ENCODE measurements at regions of chr1 and their contacts with region 1.

Region 1: GRCh38 chr1:31548907-31549808 is 27.2 kb upstream of the TINAGL1 start:
- DNase-seq: peak; percentile 97
- H3K4me3 ChIP-seq: peak overlapping the region in 1 of 4 donors; percentile 12
- H3K27ac ChIP-seq: no peak overlapping the region
- H3K4me1 ChIP-seq: peaks cover 7 to 19% (median 12%) of the 10 kb centered on the region in 4 donors
- H3K27me3 ChIP-seq: peaks cover 0 to 29% (median 2%) of the 10 kb centered on the region in 4 donors
- CTCF ChIP-seq: peak in 2 of 3 experiments; percentile 91 to 95
- EP300 ChIP-seq: no peak
- POLR2A ChIP-seq: no peak

Region 2: DNA sequence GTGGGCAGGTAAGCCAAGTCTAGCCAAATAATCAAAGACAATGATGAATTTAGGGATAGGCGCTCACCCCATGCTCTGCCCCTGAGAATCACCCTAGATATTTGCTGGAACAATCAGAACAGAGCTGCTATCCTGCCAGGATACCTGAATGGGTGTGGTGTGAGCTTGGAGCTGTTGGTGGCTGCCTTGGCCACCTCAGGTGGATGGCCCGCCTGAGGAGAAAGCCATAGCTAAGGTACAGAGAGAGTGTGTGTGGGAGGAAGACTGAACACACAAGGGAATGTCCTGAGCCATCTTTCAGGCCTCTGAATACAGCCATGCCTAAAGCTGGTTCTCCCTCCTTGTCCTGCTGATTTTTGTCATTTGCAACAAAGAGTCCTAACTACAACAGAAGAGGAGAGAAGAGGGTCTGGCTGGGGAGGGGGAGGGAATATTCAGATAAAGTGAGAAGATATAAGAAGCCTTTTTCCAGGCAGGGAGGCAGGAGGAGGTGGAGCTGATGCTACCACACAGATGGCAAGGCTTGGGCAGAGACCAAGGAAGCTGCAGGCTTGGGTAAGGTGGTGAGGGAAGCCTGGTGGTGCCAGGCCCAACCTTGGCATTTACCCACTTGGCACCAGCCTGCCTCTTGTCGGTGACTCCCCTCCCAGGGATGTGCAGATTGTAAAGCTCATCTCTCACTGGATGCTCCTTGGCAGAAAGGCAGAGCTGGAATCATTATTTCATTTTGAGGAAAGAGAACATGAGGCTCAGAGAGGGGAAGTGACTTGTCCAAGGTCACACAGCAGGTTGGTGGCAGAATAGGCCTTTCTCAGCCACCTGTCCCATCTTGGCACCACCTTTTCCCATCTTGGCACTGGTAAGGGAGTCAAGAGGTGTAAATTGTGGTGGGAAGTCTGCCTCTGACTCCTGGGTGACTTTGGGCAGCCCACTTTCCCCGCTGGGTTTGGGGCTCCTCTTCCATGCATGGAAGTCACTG is 359.2 kb before region 1 on chr1:
- intact Hi-C with region 1: loop called (anchors 5 kb)
- DNase-seq: no peak
- H3K4me3 ChIP-seq: no peak overlapping the region
- H3K27ac ChIP-seq: no peak overlapping the region
- H3K4me1 ChIP-seq: no peaks in the 10 kb centered on the region
- H3K27me3 ChIP-seq: peaks cover 0 to 24% (median 0%) of the 10 kb centered on the region in 4 donors
- CTCF ChIP-seq: no peak
- EP300 ChIP-seq: no peak
- POLR2A ChIP-seq: no peak

Region 3: DNA sequence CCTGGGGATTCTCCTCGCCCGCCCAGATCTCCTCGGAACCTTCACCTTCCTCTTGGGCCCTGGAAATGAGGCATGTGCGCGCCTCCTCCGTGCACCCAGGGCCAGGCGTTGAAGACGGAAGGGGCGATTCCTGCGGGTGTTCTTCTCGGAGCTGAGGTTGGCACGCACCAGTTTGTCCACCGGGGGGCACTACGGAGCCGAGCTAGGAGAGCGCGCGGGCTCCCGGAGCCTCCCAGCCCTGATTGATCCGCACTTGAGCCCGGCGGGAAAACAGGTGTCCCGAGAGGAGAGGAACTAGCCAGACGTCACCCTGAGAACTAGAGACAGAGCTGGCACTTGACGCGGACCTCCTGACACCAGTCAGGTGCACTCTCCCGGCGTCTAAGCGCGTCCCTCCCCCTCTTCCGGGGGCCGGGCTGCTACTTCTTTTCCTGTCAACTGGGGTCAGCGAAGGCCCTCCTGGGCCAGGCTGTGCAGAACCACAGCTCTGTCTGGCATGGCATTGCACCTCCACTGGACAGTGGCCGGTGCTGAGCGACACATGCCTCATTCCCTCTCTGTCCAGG is 154.4 kb before region 1 on chr1:
- intact Hi-C with region 1: loop called (anchors 5 kb)
- DNase-seq: no peak
- H3K4me3 ChIP-seq: peak overlapping the region; percentile 40 to 58 (median 46)
- H3K27ac ChIP-seq: no peak overlapping the region
- H3K4me1 ChIP-seq: peaks cover 8 to 11% (median 11%) of the 10 kb centered on the region in 4 donors
- H3K27me3 ChIP-seq: no peaks in the 10 kb centered on the region
- CTCF ChIP-seq: peak; percentile 81 to 87 (median 82)
- EP300 ChIP-seq: no peak
- POLR2A ChIP-seq: no peak

Region 4: GRCh38 chr1:31422505-31423319 is 126.4 kb before region 1 on chr1:
- intact Hi-C with region 1: loop called (anchors 10 kb)
- DNase-seq: no peak
- H3K4me3 ChIP-seq: no peak overlapping the region
- H3K27ac ChIP-seq: no peak overlapping the region
- H3K4me1 ChIP-seq: peaks cover 0 to 5% (median 0%) of the 10 kb centered on the region in 4 donors
- H3K27me3 ChIP-seq: no peaks in the 10 kb centered on the region
- CTCF ChIP-seq: peak in 2 of 3 experiments; percentile 89 to 90
- EP300 ChIP-seq: no peak
- POLR2A ChIP-seq: no peak

Region 5: GRCh38 chr1:31460027-31460426 is 89.1 kb before region 1 on chr1:
- intact Hi-C with region 1: loop called (anchors 10 kb)
- DNase-seq: no peak
- H3K4me3 ChIP-seq: no peak overlapping the region
- H3K27ac ChIP-seq: no peak overlapping the region
- H3K4me1 ChIP-seq: no peaks in the 10 kb centered on the region
- H3K27me3 ChIP-seq: peaks cover 0 to 32% (median 0%) of the 10 kb centered on the region in 4 donors
- CTCF ChIP-seq: no peak
- EP300 ChIP-seq: no peak
- POLR2A ChIP-seq: no peak

Region 6: DNA sequence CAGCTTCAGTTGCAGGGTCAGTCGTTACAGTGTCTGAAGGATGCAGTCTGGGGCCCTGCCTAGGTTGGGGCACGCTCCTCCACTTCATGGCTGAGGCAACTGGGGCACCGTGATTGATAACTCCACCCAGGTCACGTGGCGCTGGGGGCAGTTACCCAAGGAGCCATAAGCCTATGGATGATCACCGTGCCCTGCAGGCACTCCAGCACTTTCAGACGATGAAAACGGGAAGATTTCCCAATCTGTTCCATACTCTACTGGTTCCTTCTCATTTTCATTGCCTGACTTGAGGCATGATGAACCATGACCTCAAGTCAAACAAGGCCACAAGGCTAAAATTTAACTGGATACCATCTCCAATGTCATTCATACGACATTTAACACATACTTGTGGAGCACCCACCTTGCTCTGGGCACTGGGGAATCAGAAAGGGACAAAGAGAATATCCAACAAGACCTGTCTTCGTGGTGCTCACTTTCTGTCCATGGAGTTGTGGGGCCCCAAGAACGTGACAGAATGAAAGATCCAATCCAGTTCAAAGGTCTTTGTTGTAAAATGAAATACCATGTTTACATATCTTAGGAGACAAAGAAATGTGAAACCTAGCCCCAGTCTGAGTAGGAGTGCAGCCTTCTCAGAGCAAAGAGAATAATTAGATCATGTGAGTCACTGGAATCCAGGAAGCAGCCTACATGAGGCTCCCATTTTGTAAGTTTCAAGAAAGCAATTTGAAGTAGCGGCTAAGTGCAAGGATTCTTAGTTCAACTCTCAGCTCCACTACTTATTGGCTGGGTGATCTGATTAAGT is 306.1 kb after region 1 on chr1:
- intact Hi-C with region 1: no loop called
- DNase-seq: no peak
- H3K4me3 ChIP-seq: no peak overlapping the region
- H3K27ac ChIP-seq: no peak overlapping the region
- H3K4me1 ChIP-seq: no peaks in the 10 kb centered on the region
- H3K27me3 ChIP-seq: no peaks in the 10 kb centered on the region
- CTCF ChIP-seq: no peak
- EP300 ChIP-seq: no peak
- POLR2A ChIP-seq: no peak

Measured in esophagus muscularis mucosa (tissue), 4 donors.